ENCODE measurements at regions of chr18 and their contacts with region 1.

Region 1: DNA sequence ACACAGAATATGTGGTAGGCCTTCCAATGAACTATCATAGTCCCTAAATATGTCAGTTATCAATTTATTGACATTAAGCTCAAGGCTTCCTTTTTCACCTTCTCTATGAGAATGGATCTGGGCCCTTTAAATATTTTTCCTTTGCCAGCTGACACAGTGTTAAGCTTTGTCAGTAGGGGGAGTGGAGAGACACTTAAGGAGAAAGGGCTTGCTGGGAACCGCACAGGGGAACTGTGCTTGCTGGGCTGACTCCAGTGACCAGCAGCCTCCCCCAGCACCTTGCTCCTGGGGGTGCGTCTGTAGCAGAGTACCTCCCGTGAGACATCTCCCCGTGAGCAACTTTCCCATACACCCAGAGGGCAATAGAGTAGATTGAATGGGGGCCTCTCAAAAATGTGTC is 6.5 kb upstream of the PTPN2 start:
- DNase-seq: no peak
- ATAC-seq: no peak
- H3K4me3 ChIP-seq: no peak overlapping the region
- H3K27ac ChIP-seq: no peak overlapping the region
- H3K4me1 ChIP-seq: peaks cover 0 to 4% (median 0%) of the 10 kb centered on the region in 9 donors
- H3K27me3 ChIP-seq: peaks cover 0 to 26% (median 5%) of the 10 kb centered on the region in 7 donors
- CTCF ChIP-seq: peak in 1 of 9 donors; percentile 23

Region 2: DNA sequence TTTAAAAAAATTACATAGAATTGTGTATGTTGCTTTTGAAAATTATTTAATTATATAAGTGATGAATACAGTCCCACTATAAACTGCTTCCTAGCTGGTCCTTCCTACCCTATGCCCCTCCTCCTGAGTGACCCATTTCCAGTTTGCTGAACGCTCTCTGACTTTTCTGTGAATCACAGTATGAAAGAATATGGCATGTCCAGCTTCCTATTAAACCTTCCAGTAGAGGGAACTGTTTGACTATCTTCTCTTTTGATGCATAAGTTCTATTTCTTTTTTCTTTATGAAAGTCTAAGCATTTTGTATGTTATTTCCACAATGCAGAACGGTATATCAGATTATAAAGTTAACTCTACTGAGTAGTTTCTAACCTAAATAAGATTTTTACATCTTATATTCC is 146.4 kb before region 1 on chr18:
- intact Hi-C with region 1: loop called in 1 of 10 experiments (anchors 10 kb)
- DNase-seq: no peak
- ATAC-seq: peak in 3 of 8 donors; percentile 31 to 56 (median 42)
- H3K4me3 ChIP-seq: no peak overlapping the region
- H3K27ac ChIP-seq: no peak overlapping the region
- H3K4me1 ChIP-seq: no peaks in the 10 kb centered on the region
- H3K27me3 ChIP-seq: no peaks in the 10 kb centered on the region
- CTCF ChIP-seq: peak; percentile 12 to 72 (median 61)

Region 3: GRCh38 chr18:12783524-12783923 is 107.0 kb before region 1 on chr18:
- intact Hi-C with region 1: loop called in 1 of 10 experiments (anchors 5 kb)
- DNase-seq: no peak
- ATAC-seq: no peak
- H3K4me3 ChIP-seq: no peak overlapping the region
- H3K27ac ChIP-seq: no peak overlapping the region
- H3K4me1 ChIP-seq: no peaks in the 10 kb centered on the region
- H3K27me3 ChIP-seq: no peaks in the 10 kb centered on the region
- CTCF ChIP-seq: no peak

Measured in heart right ventricle (tissue), 16 donors.